ENCODE measurements at regions of chr5 and their contacts with region 1.

Region 1: DNA sequence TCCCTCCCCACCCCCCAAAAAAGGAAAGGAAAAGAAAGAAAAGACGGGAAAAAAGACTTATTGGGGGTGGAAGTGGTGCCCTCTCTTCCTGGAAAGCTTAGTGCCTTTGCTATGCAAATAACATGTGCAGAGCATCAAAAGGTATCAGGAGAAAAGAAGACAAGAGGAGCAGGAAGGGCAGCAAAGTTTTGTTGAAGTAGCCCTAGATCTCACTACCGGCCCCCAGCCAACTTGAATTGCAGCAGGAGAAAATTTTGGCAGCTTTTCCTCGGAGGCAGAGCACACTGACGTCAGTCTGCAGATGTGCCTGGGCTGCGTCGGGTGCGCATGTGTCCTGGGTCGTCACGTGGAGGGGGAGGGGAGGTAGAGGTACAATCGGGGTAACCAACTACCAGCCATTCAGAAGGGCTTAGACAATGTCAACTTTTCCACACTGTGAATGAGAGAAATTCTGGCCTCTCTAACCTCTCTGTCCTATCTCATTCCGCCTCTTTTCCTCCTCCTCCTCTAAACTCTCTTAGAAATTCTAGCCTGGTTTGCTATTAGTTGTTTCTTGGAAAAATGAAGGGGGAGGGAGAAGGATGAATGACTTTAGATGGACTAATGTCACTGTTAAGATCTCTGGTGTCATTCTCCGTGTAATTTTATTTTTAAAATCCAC is at the start of gene ADAMTS6:
- DNase-seq: peak; percentile 94
- H3K4me3 ChIP-seq: peak within 1 kb of the TSS; percentile 64 to 98 (median 96)
- H3K27ac ChIP-seq: peak within 1 kb of the TSS; percentile 87
- H3K4me1 ChIP-seq: peaks cover 36% of the 10 kb centered on the region
- H3K27me3 ChIP-seq: no peaks in the 10 kb centered on the region
- CTCF ChIP-seq: no peak
- POLR2A ChIP-seq: peak; percentile 55
- total RNA-seq, gene ADAMTS6: 43.4 and 57.4 TPM in 2 replicates

Region 2: GRCh38 chr5:64505769-64506566 is 975.8 kb before region 1 on chr5 and contains the start of gene RGS7BP:
- CTCF ChIA-PET with region 1: no interaction called
- POLR2A ChIA-PET with region 1: no interaction called
- dilution Hi-C with region 1: no loop called
- intact Hi-C with region 1: loop called (anchors 5 kb)
- DNase-seq: peak; percentile 66
- H3K4me3 ChIP-seq: peak within 1 kb of the TSS; percentile 27 to 48 (median 47)
- H3K27ac ChIP-seq: no peak within 1 kb of the TSS
- H3K4me1 ChIP-seq: peaks cover 33% of the 10 kb centered on the region
- H3K27me3 ChIP-seq: peaks cover 21 to 32% of the 10 kb centered on the region in 2 experiments
- CTCF ChIP-seq: no peak
- POLR2A ChIP-seq: no peak
- total RNA-seq, gene RGS7BP: 2.0 and 4.2 TPM in 2 replicates

Region 3: DNA sequence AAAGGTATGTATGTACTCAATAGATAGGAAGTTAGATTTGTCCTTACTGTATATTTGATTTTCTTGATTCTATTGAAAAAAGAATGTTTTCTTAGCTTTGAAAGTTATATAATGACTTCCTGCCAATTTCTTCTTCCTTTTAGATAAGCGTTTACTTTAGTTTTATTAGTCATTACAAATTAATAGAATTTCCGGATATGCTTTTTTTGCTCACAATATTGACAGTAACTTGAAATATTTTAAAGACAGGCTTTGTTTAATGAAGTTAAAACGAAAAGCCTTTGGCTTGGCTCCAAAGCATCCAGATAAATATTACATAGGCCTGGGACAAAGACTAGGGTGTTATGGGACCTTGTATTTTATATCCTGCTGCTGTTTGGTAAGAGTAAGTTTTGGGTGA is 663.5 kb before region 1 on chr5:
- CTCF ChIA-PET with region 1: interaction called, 22 read pairs
- POLR2A ChIA-PET with region 1: no interaction called
- dilution Hi-C with region 1: no loop called
- intact Hi-C with region 1: no loop called
- DNase-seq: peak; percentile 66
- H3K4me3 ChIP-seq: no peak overlapping the region
- H3K27ac ChIP-seq: no peak overlapping the region
- H3K4me1 ChIP-seq: peaks cover 31% of the 10 kb centered on the region
- H3K27me3 ChIP-seq: no peaks in the 10 kb centered on the region
- CTCF ChIP-seq: no peak
- POLR2A ChIP-seq: no peak

Region 4: DNA sequence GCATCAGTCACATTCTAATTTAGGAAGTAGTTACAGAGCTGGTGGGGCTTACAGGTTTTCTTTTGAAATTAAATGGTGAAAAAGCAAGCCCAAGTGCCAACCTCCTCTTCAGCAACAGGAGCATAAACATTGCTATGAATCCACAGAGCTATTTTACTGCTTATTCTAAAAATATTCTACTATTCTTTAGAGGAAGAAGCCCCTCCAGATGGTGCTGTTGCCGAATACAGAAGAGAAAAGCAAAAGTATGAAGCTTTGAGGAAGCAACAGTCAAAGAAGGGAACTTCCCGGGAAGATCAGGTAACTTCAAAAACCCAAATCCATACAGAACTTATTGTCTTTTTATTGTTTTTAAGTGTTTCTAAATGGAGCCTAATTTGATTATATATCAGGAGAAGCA is 510.3 kb before region 1 on chr5:
- CTCF ChIA-PET with region 1: interaction called, 26 read pairs
- POLR2A ChIA-PET with region 1: no interaction called
- dilution Hi-C with region 1: no loop called
- intact Hi-C with region 1: no loop called
- DNase-seq: peak; percentile 3
- H3K4me3 ChIP-seq: no peak overlapping the region
- H3K27ac ChIP-seq: no peak overlapping the region
- H3K4me1 ChIP-seq: no peaks in the 10 kb centered on the region
- H3K27me3 ChIP-seq: no peaks in the 10 kb centered on the region
- CTCF ChIP-seq: no peak
- POLR2A ChIP-seq: no peak

Region 5: GRCh38 chr5:65102828-65103711 is 378.7 kb before region 1 on chr5:
- CTCF ChIA-PET with region 1: interaction called, 106 read pairs
- POLR2A ChIA-PET with region 1: no interaction called
- dilution Hi-C with region 1: no loop called
- intact Hi-C with region 1: loop called (anchors 1 kb)
- DNase-seq: peak; percentile 74
- H3K4me3 ChIP-seq: peak overlapping the region; percentile 13 to 57 (median 43)
- H3K27ac ChIP-seq: peak overlapping the region; percentile 63
- H3K4me1 ChIP-seq: peaks cover 13% of the 10 kb centered on the region
- H3K27me3 ChIP-seq: no peaks in the 10 kb centered on the region
- CTCF ChIP-seq: peak in 1 of 2 donors; percentile 36
- POLR2A ChIP-seq: peak; percentile 34

Region 6: DNA sequence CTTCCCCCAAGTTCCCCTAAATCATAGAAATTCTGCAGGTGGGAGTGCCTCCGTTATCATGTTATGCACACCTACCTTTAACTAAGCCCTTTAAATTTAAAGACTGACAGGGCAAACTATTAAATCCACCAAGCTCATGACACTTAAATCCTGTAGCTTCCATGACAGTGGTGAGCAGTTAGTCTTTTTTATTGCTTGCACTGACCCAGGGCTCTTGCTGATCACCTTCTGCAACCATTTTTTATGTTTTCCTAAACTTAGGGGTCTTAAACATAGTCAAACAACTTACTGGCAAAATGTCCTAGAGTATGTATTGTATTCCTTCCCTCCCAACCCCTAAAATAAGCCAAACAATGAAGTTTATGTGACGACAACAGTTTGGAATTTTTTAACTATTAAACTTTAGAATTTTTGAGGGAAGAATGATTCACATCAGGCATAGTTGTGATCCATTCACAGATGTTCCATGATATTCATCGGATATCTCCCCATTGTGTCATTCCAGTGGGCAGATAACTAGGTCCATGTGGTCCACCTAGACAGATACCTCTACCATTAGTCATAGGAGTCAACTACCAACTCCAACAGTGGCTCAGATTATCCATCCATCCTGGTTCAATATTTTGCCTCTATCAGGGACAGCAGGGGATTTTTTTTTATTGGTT is 283.2 kb before region 1 on chr5:
- CTCF ChIA-PET with region 1: interaction called, 7 read pairs
- POLR2A ChIA-PET with region 1: no interaction called
- dilution Hi-C with region 1: no loop called
- intact Hi-C with region 1: loop called (anchors 1 kb)
- DNase-seq: peak; percentile 90
- H3K4me3 ChIP-seq: no peak overlapping the region
- H3K27ac ChIP-seq: peak overlapping the region; percentile 92
- H3K4me1 ChIP-seq: peaks cover 40% of the 10 kb centered on the region
- H3K27me3 ChIP-seq: no peaks in the 10 kb centered on the region
- CTCF ChIP-seq: no peak
- POLR2A ChIP-seq: peak; percentile 43

Region 7: DNA sequence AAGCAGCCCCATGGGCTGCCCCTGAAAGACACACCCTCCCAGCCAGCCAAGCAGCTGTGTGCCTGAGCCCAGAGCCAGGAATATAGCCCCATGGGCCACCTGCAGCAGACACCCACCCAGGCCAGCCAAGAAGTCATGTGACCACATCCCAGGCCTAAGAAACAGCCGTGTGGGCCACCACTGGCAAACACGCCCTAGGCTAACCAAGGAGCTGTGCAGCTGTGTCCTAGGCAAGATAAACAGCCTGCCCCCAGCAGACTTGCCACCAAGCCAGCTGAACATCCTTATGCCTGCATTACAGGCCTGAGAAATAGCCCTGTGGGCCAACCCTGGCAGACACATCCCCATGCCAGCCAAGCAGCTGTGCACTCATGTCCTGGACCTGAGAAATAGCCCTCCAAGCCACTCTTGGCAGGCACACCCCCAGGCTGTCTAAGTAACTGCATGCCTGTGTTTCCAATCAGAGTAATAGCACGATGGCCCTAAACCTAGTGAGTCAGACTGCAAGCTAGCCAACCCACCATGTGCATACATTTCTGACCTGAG is 143.1 kb before region 1 on chr5:
- CTCF ChIA-PET with region 1: no interaction called
- POLR2A ChIA-PET with region 1: no interaction called
- dilution Hi-C with region 1: no loop called
- intact Hi-C with region 1: no loop called
- DNase-seq: no peak
- H3K4me3 ChIP-seq: no peak overlapping the region
- H3K27ac ChIP-seq: no peak overlapping the region
- H3K4me1 ChIP-seq: no peaks in the 10 kb centered on the region
- H3K27me3 ChIP-seq: no peaks in the 10 kb centered on the region
- CTCF ChIP-seq: no peak
- POLR2A ChIP-seq: no peak

Region 8: GRCh38 chr5:65624571-65625555 is 143.1 kb after region 1 on chr5 and contains the starts of genes SHLD3 and TRAPPC13:
- CTCF ChIA-PET with region 1: no interaction called
- POLR2A ChIA-PET with region 1: no interaction called
- dilution Hi-C with region 1: no loop called
- intact Hi-C with region 1: no loop called
- DNase-seq: peak; percentile 92
- H3K4me3 ChIP-seq: peak within 1 kb of the TSS; percentile 76 to 97 (median 92)
- H3K27ac ChIP-seq: peak within 1 kb of the TSS; percentile 84
- H3K4me1 ChIP-seq: peaks cover 19% of the 10 kb centered on the region
- H3K27me3 ChIP-seq: no peaks in the 10 kb centered on the region
- CTCF ChIP-seq: no peak
- POLR2A ChIP-seq: peak; percentile 56
- total RNA-seq, gene SHLD3: 3.6 TPM in 2 replicates
- total RNA-seq, gene TRAPPC13: 16.4 and 24.0 TPM in 2 replicates

Region 9: GRCh38 chr5:66840511-66841013 is 1358.8 kb after region 1 on chr5:
- CTCF ChIA-PET with region 1: no interaction called
- POLR2A ChIA-PET with region 1: no interaction called
- dilution Hi-C with region 1: no loop called
- intact Hi-C with region 1: loop called (anchors 10 kb)
- DNase-seq: no peak
- H3K4me3 ChIP-seq: no peak overlapping the region
- H3K27ac ChIP-seq: no peak overlapping the region
- H3K4me1 ChIP-seq: peaks cover 29% of the 10 kb centered on the region
- H3K27me3 ChIP-seq: no peaks in the 10 kb centered on the region
- CTCF ChIP-seq: no peak
- POLR2A ChIP-seq: no peak

Measured in endothelial cell of umbilical vein (primary cell).